Activated B cell treated with CpG ODN at 0.5 μM for 24 hours (primary cell): ENCODE measurements at regions of chr11 and their contacts with region 1.

Region 1: GRCh38 chr11:111926505-111927391 is 8.0 kb downstream of the C11orf52 start:
- DNase-seq: peak; percentile 98
- ATAC-seq: peak; percentile 90
- H3K4me3 Mint-ChIP-seq: peak overlapping the region; percentile 87
- H3K27ac Mint-ChIP-seq: peak overlapping the region; percentile 90
- H3K4me1 Mint-ChIP-seq: peaks cover 17% of the 10 kb centered on the region
- H3K27me3 Mint-ChIP-seq: no peaks in the 10 kb centered on the region
- CTCF ChIP-seq: no peak

Region 2: GRCh38 chr11:111766093-111766833 is 160.5 kb before region 1 on chr11 and contains the start of gene PPP2R1B:
- CTCF ChIA-PET with region 1: no interaction called
- POLR2A ChIA-PET with region 1: interaction called, 8 read pairs
- intact Hi-C with region 1: loop called (anchors 1 kb)
- DNase-seq: peak; percentile 70
- ATAC-seq: peak; percentile 97
- H3K4me3 Mint-ChIP-seq: peak within 1 kb of the TSS; percentile 100
- H3K27ac Mint-ChIP-seq: peak within 1 kb of the TSS; percentile 93
- H3K4me1 Mint-ChIP-seq: peaks cover 25% of the 10 kb centered on the region
- H3K27me3 Mint-ChIP-seq: no peaks in the 10 kb centered on the region
- CTCF ChIP-seq: no peak
- total RNA-seq, gene PPP2R1B: 36.2 and 37.9 TPM in 2 replicates

Region 3: GRCh38 chr11:111938687-111939160 is 12.0 kb after region 1 on chr11:
- CTCF ChIA-PET with region 1: interaction called, 4 read pairs
- POLR2A ChIA-PET with region 1: interaction called, 8 read pairs
- intact Hi-C with region 1: loop called (anchors 1 kb)
- DNase-seq: no peak
- ATAC-seq: peak; percentile 89
- H3K4me3 Mint-ChIP-seq: peak overlapping the region; percentile 77
- H3K27ac Mint-ChIP-seq: peak overlapping the region; percentile 31
- H3K4me1 Mint-ChIP-seq: peaks cover 29% of the 10 kb centered on the region
- H3K27me3 Mint-ChIP-seq: peaks cover 6% of the 10 kb centered on the region
- CTCF ChIP-seq: no peak

Region 4: GRCh38 chr11:112050721-112051120 is 124.0 kb after region 1 on chr11:
- CTCF ChIA-PET with region 1: no interaction called
- POLR2A ChIA-PET with region 1: no interaction called
- intact Hi-C with region 1: loop called (anchors 1 kb)
- DNase-seq: no peak
- ATAC-seq: peak; percentile 64
- H3K4me3 Mint-ChIP-seq: peak overlapping the region; percentile 69
- H3K27ac Mint-ChIP-seq: peak overlapping the region; percentile 91
- H3K4me1 Mint-ChIP-seq: peaks cover 56% of the 10 kb centered on the region
- H3K27me3 Mint-ChIP-seq: no peaks in the 10 kb centered on the region
- CTCF ChIP-seq: no peak

Region 5: GRCh38 chr11:112226062-112226830 is 299.5 kb after region 1 on chr11 and contains the start of gene PTS:
- CTCF ChIA-PET with region 1: no interaction called
- POLR2A ChIA-PET with region 1: interaction called, 6 read pairs
- intact Hi-C with region 1: loop called (anchors 2 kb)
- DNase-seq: peak; percentile 87
- ATAC-seq: peak; percentile 93
- H3K4me3 Mint-ChIP-seq: peak within 1 kb of the TSS; percentile 92
- H3K27ac Mint-ChIP-seq: peak within 1 kb of the TSS; percentile 96
- H3K4me1 Mint-ChIP-seq: peaks cover 13% of the 10 kb centered on the region
- H3K27me3 Mint-ChIP-seq: no peaks in the 10 kb centered on the region
- CTCF ChIP-seq: no peak
- total RNA-seq, gene PTS: 22.7 and 30.4 TPM in 2 replicates